H1 (cell line): ENCODE measurements at regions of chr4 and their contacts with region 1.

Region 1: DNA sequence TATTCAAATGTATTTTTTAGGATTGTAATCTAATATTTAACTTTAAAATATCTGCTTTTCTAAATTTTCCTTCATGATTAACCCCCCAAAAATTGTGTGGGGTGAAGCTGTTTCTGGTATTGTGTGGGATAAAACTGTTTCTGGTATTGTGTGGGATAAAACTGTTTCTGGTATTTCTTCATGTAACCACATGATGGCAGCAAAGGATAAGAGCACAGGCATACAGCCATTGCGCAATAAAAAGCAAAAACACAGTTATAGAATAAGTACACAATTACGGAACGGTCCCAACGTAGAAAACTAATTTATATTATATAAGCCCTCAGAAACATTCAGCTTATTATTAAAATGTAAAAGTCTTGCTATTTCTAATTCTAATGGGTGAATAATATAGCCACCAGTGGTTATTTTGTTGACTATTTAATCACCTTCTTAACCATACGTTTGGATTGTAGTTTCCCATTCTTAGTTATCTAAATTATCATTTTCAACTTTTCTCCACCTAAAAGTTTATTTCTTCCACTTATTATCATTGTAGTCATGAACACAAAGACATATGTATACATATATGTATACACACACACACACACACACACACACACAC is 333.9 kb upstream of the FSTL5 start:
- DNase-seq: no peak
- H3K4me3 ChIP-seq: no peak overlapping the region
- H3K27ac ChIP-seq: no peak overlapping the region
- H3K4me1 ChIP-seq: no peaks in the 10 kb centered on the region
- H3K27me3 ChIP-seq: no peaks in the 10 kb centered on the region
- CTCF ChIP-seq: peak in 2 of 3 experiments; percentile 53 to 61; a peak in 3 of 4 replicates
- EP300 ChIP-seq: no peak
- POLR2A ChIP-seq: no peak
- RAD21 ChIP-seq: peak; percentile 94 to 96

Region 2: DNA sequence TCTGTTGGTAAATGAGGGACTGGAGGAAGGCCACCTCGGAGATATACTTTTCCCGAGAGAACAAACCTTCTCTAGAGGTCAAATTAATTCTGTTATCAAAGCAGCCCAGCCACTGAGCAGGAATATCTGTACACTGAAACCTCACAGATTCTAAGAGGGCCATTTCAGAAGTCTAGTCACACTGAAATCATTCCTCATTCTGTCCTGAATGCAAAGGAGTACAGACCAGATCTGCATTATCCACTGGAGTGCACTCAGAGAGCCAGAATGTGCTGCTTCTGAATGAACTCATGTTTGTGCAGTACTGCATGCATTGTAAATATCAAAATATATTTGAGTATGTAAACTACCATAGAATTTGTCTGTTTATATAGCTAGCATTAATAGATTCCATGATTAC is 55.5 kb before region 1 on chr4:
- CTCF ChIA-PET with region 1: no interaction called
- POLR2A ChIA-PET with region 1: no interaction called
- DNase-seq: no peak
- H3K4me3 ChIP-seq: no peak overlapping the region
- H3K27ac ChIP-seq: no peak overlapping the region
- H3K4me1 ChIP-seq: no peaks in the 10 kb centered on the region
- H3K27me3 ChIP-seq: no peaks in the 10 kb centered on the region
- CTCF ChIP-seq: no peak
- EP300 ChIP-seq: no peak
- POLR2A ChIP-seq: no peak
- RAD21 ChIP-seq: no peak

Region 3: DNA sequence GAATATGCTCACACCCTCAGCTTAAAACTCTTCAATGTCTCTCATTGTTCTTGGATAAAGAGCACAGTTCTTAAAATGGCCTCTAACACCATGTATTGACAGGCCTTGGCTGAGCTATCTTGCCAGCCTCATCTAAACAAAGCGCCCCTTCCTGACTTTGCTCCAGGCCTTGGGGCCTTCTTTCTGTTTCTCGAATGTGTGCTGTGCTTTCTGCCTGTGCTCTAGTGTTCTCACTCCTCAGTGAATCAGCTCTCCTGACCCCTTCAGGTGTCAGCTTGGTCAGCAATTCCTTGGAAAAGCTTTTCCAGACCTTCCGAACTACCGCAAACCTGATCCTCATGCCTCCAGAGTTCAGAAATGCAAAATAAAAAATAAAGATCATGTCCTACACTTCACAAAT is 12.4 kb after region 1 on chr4:
- CTCF ChIA-PET with region 1: interaction called, 14 read pairs
- POLR2A ChIA-PET with region 1: no interaction called
- DNase-seq: no peak
- H3K4me3 ChIP-seq: no peak overlapping the region
- H3K27ac ChIP-seq: no peak overlapping the region
- H3K4me1 ChIP-seq: no peaks in the 10 kb centered on the region
- H3K27me3 ChIP-seq: no peaks in the 10 kb centered on the region
- CTCF ChIP-seq: no peak
- EP300 ChIP-seq: no peak
- POLR2A ChIP-seq: no peak
- RAD21 ChIP-seq: 0 out of 4 replicates have a peak, but pooled peaks of 1 of the 2 experiments have one; percentile 9

Region 4: GRCh38 chr4:162659716-162660115 is 162.1 kb after region 1 on chr4:
- CTCF ChIA-PET with region 1: no interaction called
- POLR2A ChIA-PET with region 1: no interaction called
- DNase-seq: no peak
- H3K4me3 ChIP-seq: no peak overlapping the region
- H3K27ac ChIP-seq: no peak overlapping the region
- H3K4me1 ChIP-seq: peaks cover 0 to 9% (median 2%) of the 10 kb centered on the region in 4 experiments; a peak in 4 of 7 replicates
- H3K27me3 ChIP-seq: no peaks in the 10 kb centered on the region
- CTCF ChIP-seq: no peak
- EP300 ChIP-seq: no peak
- POLR2A ChIP-seq: no peak
- RAD21 ChIP-seq: no peak

Region 5: GRCh38 chr4:163042306-163042705 is 544.6 kb after region 1 on chr4:
- CTCF ChIA-PET with region 1: interaction called, 29 read pairs
- POLR2A ChIA-PET with region 1: no interaction called
- DNase-seq: no peak
- H3K4me3 ChIP-seq: no peak overlapping the region
- H3K27ac ChIP-seq: no peak overlapping the region
- H3K4me1 ChIP-seq: no peaks in the 10 kb centered on the region
- H3K27me3 ChIP-seq: no peaks in the 10 kb centered on the region
- CTCF ChIP-seq: no peak
- EP300 ChIP-seq: no peak
- POLR2A ChIP-seq: no peak
- RAD21 ChIP-seq: no peak